ENCODE measurements at regions of chr3 and their contacts with region 1.

Region 1: GRCh38 chr3:18758047-18758704 is 333.0 kb upstream of the SATB1 start:
- DNase-seq: peak; percentile 56
- H3K4me3 ChIP-seq: no peak overlapping the region
- H3K27ac ChIP-seq: no peak overlapping the region
- H3K4me1 ChIP-seq: no peaks in the 10 kb centered on the region
- H3K27me3 ChIP-seq: peaks cover 1% of the 10 kb centered on the region
- CTCF ChIP-seq: peak; percentile 71

Region 2: GRCh38 chr3:17431004-17431403 is 1327.2 kb before region 1 on chr3:
- CTCF ChIA-PET with region 1: no interaction called
- POLR2A ChIA-PET with region 1: no interaction called
- intact Hi-C with region 1: no loop called
- DNase-seq: peak; percentile 43
- H3K4me3 ChIP-seq: no peak overlapping the region
- H3K27ac ChIP-seq: no peak overlapping the region
- H3K4me1 ChIP-seq: no peaks in the 10 kb centered on the region
- H3K27me3 ChIP-seq: no peaks in the 10 kb centered on the region
- CTCF ChIP-seq: peak; percentile 63

Region 3: GRCh38 chr3:17882981-17883380 is 875.2 kb before region 1 on chr3:
- CTCF ChIA-PET with region 1: no interaction called
- POLR2A ChIA-PET with region 1: no interaction called
- intact Hi-C with region 1: loop called (anchors 10 kb)
- DNase-seq: no peak
- H3K4me3 ChIP-seq: no peak overlapping the region
- H3K27ac ChIP-seq: no peak overlapping the region
- H3K4me1 ChIP-seq: no peaks in the 10 kb centered on the region
- H3K27me3 ChIP-seq: peaks cover 36% of the 10 kb centered on the region
- CTCF ChIP-seq: no peak

Region 4: DNA sequence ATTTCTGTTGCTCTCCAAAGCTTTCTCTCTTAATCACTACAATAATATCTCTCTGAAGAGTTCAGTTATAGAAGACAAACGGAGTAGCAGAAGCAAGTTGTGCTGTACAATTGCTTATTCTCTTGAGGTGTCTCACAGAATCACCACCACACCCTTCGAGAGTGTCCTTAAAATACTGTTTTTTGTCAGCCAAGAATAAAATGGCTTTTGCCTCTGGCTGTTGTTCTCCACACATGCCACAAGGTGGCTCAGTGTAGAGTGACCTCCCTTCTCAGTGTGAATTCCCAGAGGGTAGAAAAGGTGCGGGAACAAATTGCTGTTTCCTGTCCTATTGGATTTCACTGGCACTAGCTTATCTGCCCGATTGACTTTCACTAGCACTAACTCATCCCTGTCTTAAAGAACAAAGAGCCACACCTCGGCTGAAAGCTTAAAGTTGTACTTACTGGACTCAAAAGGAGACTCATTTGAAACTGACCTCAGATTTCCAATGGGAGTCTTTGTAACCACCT is 198.8 kb before region 1 on chr3:
- CTCF ChIA-PET with region 1: no interaction called
- POLR2A ChIA-PET with region 1: no interaction called
- intact Hi-C with region 1: loop called (anchors 2 kb)
- DNase-seq: peak; percentile 71
- H3K4me3 ChIP-seq: no peak overlapping the region
- H3K27ac ChIP-seq: no peak overlapping the region
- H3K4me1 ChIP-seq: no peaks in the 10 kb centered on the region
- H3K27me3 ChIP-seq: no peaks in the 10 kb centered on the region
- CTCF ChIP-seq: peak; percentile 66

Region 5: GRCh38 chr3:18883571-18883970 is 125.4 kb after region 1 on chr3:
- CTCF ChIA-PET with region 1: no interaction called
- POLR2A ChIA-PET with region 1: no interaction called
- intact Hi-C with region 1: no loop called
- DNase-seq: no peak
- H3K4me3 ChIP-seq: no peak overlapping the region
- H3K27ac ChIP-seq: no peak overlapping the region
- H3K4me1 ChIP-seq: no peaks in the 10 kb centered on the region
- H3K27me3 ChIP-seq: no peaks in the 10 kb centered on the region
- CTCF ChIP-seq: no peak

Measured in A673 (cell line).